HepG2 (cell line): ENCODE measurements at regions of chr19 and their contacts with region 1.

Region 1: DNA sequence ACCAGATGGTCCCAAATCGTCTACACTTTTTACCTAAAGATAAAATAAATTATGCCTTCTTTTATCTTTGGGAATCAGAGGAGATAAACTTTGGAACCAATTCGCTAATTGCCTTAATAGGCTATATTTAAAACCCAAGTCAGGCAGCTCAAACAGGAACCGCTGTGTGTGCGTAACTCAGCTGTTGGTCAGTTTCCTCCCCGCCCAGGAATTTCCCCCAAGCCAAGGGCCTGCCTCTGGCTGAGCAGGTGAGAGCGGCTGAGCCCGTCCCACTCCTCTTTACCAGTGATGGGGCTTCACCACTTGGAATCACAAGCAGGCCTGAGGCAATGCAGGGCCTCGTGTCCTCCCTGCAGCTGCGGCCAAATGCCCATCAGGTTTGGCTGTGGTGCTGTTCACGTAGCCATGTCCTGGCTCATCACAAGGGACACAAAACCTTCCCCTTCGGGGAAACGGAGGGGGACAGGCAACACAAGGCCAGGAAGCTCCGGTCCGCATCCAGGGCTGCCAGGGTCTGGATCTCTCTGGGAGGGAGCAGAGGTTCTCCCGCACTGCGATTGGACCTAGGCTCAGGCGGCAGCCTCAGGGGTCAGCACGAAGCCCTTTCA is 503 bp upstream of the SLC7A9 start:
- DNase-seq: peak; percentile 16
- ATAC-seq: peak; percentile 80
- H3K4me3 ChIP-seq: peak overlapping the region; percentile 50 to 74 (median 60)
- H3K27ac ChIP-seq: peak overlapping the region; percentile 72
- H3K4me1 ChIP-seq: peaks cover 26% of the 10 kb centered on the region
- H3K27me3 ChIP-seq: no peaks in the 10 kb centered on the region
- CTCF ChIP-seq: no peak
- EP300 ChIP-seq: no peak
- POLR2A ChIP-seq: no peak
- RAD21 ChIP-seq: no peak

Region 2: DNA sequence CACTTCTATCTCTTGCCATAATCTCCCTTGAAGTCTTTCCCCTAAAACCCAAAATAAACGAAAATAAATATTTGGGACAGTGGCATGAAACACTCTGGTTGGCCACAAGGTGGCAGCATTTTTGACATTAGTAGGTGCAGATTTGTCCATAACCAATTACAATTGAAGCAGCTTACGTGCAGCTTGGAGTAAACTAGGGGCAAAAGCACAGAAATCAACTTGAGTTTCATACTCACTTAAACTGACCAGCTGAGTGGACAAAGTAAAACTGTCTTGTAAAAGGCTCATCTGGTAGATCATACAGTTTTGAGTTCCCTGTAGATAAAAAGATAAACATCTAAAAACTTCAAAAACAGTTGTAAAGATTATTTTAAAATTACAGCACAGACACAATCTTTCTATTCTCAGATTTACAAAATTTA is 270.3 kb before region 1 on chr19:
- CTCF ChIA-PET with region 1: no interaction called
- POLR2A ChIA-PET with region 1: no interaction called
- in situ Hi-C with region 1: no loop called
- intact Hi-C with region 1: loop called (anchors 2 kb)
- DNase-seq: peak; percentile 57
- ATAC-seq: peak; percentile 68
- H3K4me3 ChIP-seq: no peak overlapping the region
- H3K27ac ChIP-seq: no peak overlapping the region
- H3K4me1 ChIP-seq: no peaks in the 10 kb centered on the region
- H3K27me3 ChIP-seq: no peaks in the 10 kb centered on the region
- CTCF ChIP-seq: peak; percentile 73
- EP300 ChIP-seq: no peak
- POLR2A ChIP-seq: no peak
- RAD21 ChIP-seq: peak; percentile 15; the same call in 1 of the 2 replicates

Region 3: DNA sequence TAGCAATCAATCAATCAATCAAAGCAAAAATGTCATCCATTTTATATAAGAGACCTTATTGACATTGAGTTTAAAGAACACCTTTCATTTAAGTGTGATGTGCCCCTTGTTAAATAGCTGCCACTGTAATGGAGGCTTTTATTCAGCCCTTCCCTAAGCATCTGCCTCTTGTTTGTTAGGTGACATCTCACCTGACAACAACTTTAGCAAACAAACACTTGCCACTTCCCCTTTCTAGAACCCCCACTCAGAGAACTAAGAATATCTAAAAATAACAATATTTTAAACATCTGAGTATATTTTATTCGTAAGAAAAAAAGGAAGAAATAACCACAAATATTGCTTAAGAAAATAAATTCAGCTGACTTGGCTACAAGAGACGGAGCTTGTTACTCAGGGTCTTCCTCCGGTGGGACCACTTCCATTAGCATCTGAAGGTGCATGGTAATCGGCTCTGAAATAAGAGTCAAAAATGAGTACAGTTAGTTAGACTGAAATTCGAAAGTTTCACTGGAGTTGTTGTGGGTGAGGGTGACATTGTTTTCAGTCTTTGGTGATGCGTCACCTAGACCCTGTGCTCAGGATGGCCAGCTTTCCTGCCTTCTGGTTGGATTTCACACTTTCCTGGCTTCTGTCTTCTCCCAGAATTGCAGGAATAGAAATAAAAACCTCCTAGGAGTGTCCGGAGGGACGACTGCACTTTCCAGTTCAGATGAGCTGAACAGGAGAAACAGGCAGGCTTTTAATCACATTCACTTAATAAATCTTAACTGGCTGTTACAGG is 39.6 kb before region 1 on chr19:
- CTCF ChIA-PET with region 1: no interaction called
- POLR2A ChIA-PET with region 1: no interaction called
- in situ Hi-C with region 1: no loop called
- intact Hi-C with region 1: loop called (anchors 1 kb)
- DNase-seq: no peak
- ATAC-seq: no peak
- H3K4me3 ChIP-seq: no peak overlapping the region
- H3K27ac ChIP-seq: no peak overlapping the region
- H3K4me1 ChIP-seq: peaks cover 17% of the 10 kb centered on the region
- H3K27me3 ChIP-seq: no peaks in the 10 kb centered on the region
- CTCF ChIP-seq: no peak
- EP300 ChIP-seq: no peak
- POLR2A ChIP-seq: no peak
- RAD21 ChIP-seq: no peak